Activated T-helper 1 cell treated with anti-CD3 and anti-CD28 coated beads, Interleukin-12 subunit alpha, Interleukin-12 subunit beta, Interleukin-2, Interleukin-4 antibody, amounts not matched to agents 30 ng/mL and 10 ng/mL and 1 ng/mL, durations not matched to agents 14 hours and 24 hours and 36 hours (primary cell): ENCODE measurements at regions of chr6 and their contacts with region 1.

Region 1: GRCh38 chr6:88662163-88662580 is 301.2 kb downstream of the RNGTT start:
- DNase-seq: no peak
- H3K4me3 Mint-ChIP-seq: no peak overlapping the region
- H3K27ac Mint-ChIP-seq: no peak overlapping the region
- H3K4me1 Mint-ChIP-seq: peaks cover 7% of the 10 kb centered on the region
- H3K27me3 Mint-ChIP-seq: no peaks in the 10 kb centered on the region

Region 2: GRCh38 chr6:88588935-88589334 is 73.2 kb before region 1 on chr6:
- intact Hi-C with region 1: loop called (anchors 2 kb)
- DNase-seq: no peak
- H3K4me3 Mint-ChIP-seq: no peak overlapping the region
- H3K27ac Mint-ChIP-seq: no peak overlapping the region
- H3K4me1 Mint-ChIP-seq: no peaks in the 10 kb centered on the region
- H3K27me3 Mint-ChIP-seq: peaks cover 3% of the 10 kb centered on the region

Region 3: DNA sequence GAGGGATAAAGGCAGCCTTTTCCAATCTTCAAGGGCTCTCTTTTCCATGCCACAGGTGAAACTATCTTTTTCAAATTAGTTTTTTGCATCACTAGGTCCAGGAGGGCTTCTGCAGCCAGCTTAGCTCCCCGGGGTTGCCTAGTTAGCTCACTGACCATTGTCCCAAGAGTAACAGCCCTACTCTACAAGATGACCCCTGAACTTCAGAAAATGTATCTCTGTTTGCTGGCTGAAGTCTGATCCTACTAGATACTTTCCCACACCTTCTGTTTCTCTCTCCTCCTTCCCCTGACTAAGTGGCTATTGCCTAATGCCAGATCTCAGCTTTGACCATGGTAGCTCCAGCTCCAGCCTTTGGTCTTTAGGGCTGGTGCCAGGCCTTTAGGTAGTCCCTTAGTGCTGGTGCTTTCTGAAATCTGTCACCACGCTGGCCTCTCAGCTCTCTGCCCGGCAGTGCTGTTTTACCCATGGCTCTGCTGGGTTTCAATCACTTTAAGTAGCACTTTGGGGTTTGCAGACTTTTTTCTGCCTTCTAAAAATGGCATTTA is 46.1 kb after region 1 on chr6:
- intact Hi-C with region 1: no loop called
- DNase-seq: no peak
- H3K4me3 Mint-ChIP-seq: no peak overlapping the region
- H3K27ac Mint-ChIP-seq: no peak overlapping the region
- H3K4me1 Mint-ChIP-seq: peaks cover 6% of the 10 kb centered on the region
- H3K27me3 Mint-ChIP-seq: no peaks in the 10 kb centered on the region